PC-9 (cell line): ENCODE measurements at regions of chr22 and their contacts with region 1.

Region 1: GRCh38 chr22:32676196-32676595 is 125.3 kb upstream of the TIMP3 start:
- DNase-seq: no peak
- H3K4me3 ChIP-seq: no peak overlapping the region
- H3K27ac ChIP-seq: peak overlapping the region; percentile 60
- H3K4me1 ChIP-seq: peaks cover 56% of the 10 kb centered on the region
- H3K27me3 ChIP-seq: no peaks in the 10 kb centered on the region
- CTCF ChIP-seq: no peak

Region 2: DNA sequence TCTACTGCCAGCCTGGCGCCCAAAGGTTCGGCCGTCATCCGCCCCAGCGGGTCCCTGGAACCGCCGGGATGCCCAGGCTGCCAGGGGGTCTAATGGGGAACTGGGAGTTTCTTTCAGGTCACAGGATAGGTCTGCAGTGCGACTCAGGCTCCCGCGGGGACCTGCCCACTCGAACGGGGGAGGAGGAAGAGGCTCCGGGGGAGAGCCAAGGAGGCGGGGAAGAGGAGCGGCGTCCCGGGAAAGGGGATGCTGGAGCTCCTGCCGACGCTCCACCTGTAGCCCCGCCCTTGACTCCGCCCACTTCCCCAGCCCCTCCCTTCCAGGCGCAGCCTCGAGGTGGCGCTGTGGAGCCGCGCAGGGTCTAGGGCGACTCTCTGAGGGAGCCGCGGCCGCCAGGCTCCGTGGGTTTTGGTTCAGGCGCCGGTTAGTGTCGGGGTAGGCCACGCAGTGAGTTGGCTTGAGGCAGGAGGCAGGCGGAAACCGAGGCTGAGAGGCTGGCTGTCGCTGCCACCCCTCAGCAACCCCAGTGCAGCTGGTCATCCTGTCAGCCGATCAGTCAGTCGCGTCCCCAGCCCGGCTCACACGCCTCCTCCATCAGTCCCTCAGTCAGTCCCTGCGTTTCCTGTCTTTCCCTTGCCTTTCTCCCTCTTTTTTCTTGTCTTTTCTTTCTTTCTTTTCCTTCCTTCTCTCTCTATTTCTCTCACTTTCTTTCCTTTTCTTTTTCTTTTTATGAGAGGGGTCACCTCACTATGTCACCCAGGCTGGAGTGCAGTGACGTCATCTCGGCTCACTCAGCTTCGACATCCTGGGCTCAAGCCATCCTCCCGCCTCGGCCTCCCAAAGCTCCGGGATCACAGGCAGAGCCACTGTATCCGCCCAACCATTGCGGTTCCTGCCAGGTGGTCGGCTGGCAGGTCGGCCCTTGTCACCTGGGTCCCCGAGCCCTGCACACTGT is 705.4 kb before region 1 on chr22:
- CTCF ChIA-PET with region 1: no interaction called
- POLR2A ChIA-PET with region 1: no interaction called
- intact Hi-C with region 1: no loop called
- DNase-seq: peak; percentile 68 to 95
- H3K4me3 ChIP-seq: peak overlapping the region; percentile 76
- H3K27ac ChIP-seq: no peak overlapping the region
- H3K4me1 ChIP-seq: no peaks in the 10 kb centered on the region
- H3K27me3 ChIP-seq: no peaks in the 10 kb centered on the region
- CTCF ChIP-seq: peak; percentile 91

Region 3: GRCh38 chr22:32723643-32724042 is 47.4 kb after region 1 on chr22:
- CTCF ChIA-PET with region 1: no interaction called
- POLR2A ChIA-PET with region 1: interaction called, 19 read pairs
- intact Hi-C with region 1: no loop called
- DNase-seq: peak in 1 of 2 experiments; percentile 60
- H3K4me3 ChIP-seq: no peak overlapping the region
- H3K27ac ChIP-seq: no peak overlapping the region
- H3K4me1 ChIP-seq: 0 out of 2 replicates have a peak, but pooled peaks cover 5% of the 10 kb centered on the region
- H3K27me3 ChIP-seq: no peaks in the 10 kb centered on the region
- CTCF ChIP-seq: no peak

Region 4: DNA sequence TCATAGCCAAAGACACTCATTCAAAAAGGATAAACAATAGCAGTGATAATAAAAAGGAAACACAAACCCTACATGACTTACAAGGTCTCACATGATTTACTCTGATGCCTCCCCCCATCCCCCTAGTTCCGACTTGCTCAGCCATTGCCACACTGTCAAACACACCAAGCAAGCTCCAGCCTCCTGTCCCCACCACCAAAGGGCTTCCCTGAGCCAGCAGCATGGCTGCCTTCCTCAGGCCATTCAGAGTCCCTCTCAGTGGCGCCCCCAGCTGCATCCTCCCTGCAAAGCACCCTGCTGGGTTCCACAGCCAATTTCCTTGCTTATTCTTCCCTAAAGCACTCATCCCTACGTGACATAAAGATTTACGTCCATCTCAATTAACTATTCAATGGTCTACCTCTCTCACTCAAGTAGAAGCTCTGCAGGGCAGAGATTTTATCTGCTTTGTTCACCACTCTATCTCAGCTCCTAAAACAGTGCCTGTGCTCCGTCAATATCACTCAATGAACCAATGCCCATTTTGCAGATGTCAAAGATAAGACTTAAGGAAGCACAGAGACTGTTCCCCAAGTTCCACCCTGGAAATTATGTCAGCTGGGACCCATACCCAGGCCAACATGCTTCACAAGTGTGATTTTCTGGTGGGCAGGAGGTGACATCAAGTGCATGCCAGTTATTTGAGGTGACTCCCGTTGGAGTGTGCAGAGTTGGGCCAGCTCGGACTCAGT is 275.0 kb after region 1 on chr22:
- CTCF ChIA-PET with region 1: no interaction called
- POLR2A ChIA-PET with region 1: no interaction called
- intact Hi-C with region 1: no loop called
- DNase-seq: no peak
- H3K4me3 ChIP-seq: no peak overlapping the region
- H3K27ac ChIP-seq: no peak overlapping the region
- H3K4me1 ChIP-seq: no peaks in the 10 kb centered on the region
- H3K27me3 ChIP-seq: peaks cover 25% of the 10 kb centered on the region
- CTCF ChIP-seq: no peak